Activated B cell treated with CpG ODN at 0.5 μM for 24 hours (primary cell): ENCODE measurements at regions of chr11 and their contacts with region 1.

Region 1: DNA sequence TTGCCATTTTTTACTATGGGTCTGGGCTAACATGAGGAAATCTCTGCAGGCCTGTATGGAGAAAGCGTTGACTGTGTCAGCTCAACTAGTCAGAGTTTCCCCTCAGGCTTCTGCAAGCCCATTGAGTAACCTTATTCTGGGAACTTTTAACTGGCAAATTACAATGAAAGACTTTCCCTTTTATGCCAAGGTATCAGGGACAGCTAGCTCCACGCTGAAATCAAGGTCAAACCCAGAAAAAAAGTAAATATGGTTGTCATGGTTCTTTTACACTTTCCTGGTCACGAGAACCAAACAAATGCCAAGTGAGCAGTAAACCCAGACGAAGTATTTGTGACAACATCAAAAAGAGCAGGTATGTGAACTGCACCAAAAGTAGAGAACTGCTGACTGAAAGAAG is 13.8 kb downstream of the OSBP start:
- DNase-seq: no peak
- ATAC-seq: no peak
- H3K4me3 Mint-ChIP-seq: no peak overlapping the region
- H3K27ac Mint-ChIP-seq: no peak overlapping the region
- H3K4me1 Mint-ChIP-seq: no peaks in the 10 kb centered on the region
- H3K27me3 Mint-ChIP-seq: no peaks in the 10 kb centered on the region
- CTCF ChIP-seq: no peak

Region 2: GRCh38 chr11:59523541-59523940 is 78.2 kb before region 1 on chr11:
- CTCF ChIA-PET with region 1: no interaction called
- POLR2A ChIA-PET with region 1: no interaction called
- intact Hi-C with region 1: no loop called
- DNase-seq: no peak
- ATAC-seq: no peak
- H3K4me3 Mint-ChIP-seq: no peak overlapping the region
- H3K27ac Mint-ChIP-seq: no peak overlapping the region
- H3K4me1 Mint-ChIP-seq: no peaks in the 10 kb centered on the region
- H3K27me3 Mint-ChIP-seq: peaks cover 7% of the 10 kb centered on the region
- CTCF ChIP-seq: no peak

Region 3: DNA sequence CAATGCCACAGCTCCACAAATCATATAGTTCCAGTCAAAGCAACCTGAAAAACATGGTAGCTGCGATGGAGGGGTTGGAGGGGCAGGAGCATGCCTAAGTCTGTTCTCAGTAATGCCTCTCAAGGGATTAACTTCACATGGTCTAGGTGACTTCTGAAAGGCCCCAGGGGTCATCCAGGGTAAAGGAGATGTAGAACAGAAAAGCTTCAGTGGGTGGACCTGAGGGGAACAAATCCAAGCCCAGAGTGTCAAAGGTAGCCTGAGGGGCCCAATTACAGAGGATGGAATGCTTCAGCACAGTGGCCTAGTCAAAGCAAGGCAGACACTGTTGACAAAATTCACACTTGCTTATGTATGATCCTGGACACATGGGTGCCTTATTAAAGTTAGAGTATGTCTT is 67.1 kb before region 1 on chr11:
- CTCF ChIA-PET with region 1: no interaction called
- POLR2A ChIA-PET with region 1: no interaction called
- intact Hi-C with region 1: no loop called
- DNase-seq: no peak
- ATAC-seq: no peak
- H3K4me3 Mint-ChIP-seq: no peak overlapping the region
- H3K27ac Mint-ChIP-seq: no peak overlapping the region
- H3K4me1 Mint-ChIP-seq: peaks cover 7% of the 10 kb centered on the region
- H3K27me3 Mint-ChIP-seq: peaks cover 4% of the 10 kb centered on the region
- CTCF ChIP-seq: no peak

Region 4: DNA sequence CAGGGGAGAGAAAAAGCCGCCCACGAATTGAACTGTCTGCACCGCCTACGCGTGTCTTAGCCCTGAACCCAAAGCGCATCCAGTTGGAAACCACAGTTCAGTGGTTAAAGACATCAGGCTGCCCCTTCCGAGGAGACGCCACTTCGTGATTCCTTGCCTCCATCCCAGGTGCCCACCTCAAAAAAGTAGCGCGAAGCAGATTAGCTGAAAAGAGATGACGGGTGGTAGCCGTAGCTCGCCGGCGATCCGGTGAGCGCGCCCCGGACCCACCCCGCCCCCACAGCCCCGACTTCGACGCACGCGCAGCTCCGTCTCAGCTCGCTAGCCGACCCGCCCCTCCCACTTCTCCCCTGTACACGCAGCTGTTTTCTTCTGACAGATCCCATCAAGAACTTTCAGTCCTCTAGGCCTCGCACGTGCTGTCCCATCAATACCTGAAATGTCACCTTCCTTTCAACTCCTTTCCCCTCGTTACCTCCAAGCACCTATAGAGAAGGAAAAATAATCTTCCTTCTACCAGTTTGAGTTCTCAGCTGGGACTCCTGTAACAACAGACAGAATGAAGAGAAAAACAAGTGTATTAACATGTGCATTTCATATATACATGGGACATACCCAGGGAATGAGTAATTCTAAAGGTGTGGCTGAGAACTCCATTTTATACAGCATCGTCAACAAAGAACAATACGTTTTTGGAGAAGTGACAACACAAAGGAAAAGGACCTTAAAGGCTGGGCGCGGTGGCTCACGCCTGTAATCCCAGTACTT is 40.9 kb before region 1 on chr11:
- CTCF ChIA-PET with region 1: no interaction called
- POLR2A ChIA-PET with region 1: no interaction called
- intact Hi-C with region 1: no loop called
- DNase-seq: peak; percentile 62
- ATAC-seq: peak; percentile 78
- H3K4me3 Mint-ChIP-seq: peak overlapping the region; percentile 92
- H3K27ac Mint-ChIP-seq: peak overlapping the region; percentile 91
- H3K4me1 Mint-ChIP-seq: peaks cover 43% of the 10 kb centered on the region
- H3K27me3 Mint-ChIP-seq: peaks cover 3% of the 10 kb centered on the region
- CTCF ChIP-seq: no peak

Region 5: GRCh38 chr11:59647245-59647980 is 45.6 kb after region 1 on chr11:
- CTCF ChIA-PET with region 1: no interaction called
- POLR2A ChIA-PET with region 1: interaction called, 10 read pairs
- intact Hi-C with region 1: no loop called
- DNase-seq: no peak
- ATAC-seq: no peak
- H3K4me3 Mint-ChIP-seq: no peak overlapping the region
- H3K27ac Mint-ChIP-seq: no peak overlapping the region
- H3K4me1 Mint-ChIP-seq: no peaks in the 10 kb centered on the region
- H3K27me3 Mint-ChIP-seq: no peaks in the 10 kb centered on the region
- CTCF ChIP-seq: no peak

Region 6: DNA sequence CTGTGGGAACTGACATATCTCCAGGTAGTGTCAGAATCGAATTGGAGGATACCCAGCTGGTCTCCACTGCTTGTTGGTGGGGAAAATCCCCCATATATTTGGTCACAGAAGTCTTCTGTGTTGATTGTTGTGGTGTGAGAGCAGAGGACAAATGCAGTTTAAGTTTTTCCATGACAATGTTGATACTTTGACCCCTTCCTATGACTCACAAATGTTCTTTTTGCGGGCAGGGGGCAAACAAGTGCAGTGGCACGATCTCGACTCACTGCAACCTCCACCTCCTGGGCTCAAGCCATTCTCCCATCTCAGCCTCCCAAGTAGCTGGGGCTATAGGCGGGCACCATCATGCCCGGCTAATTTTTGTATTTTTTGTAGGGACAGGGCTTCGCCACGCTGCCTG is 74.4 kb after region 1 on chr11:
- CTCF ChIA-PET with region 1: no interaction called
- POLR2A ChIA-PET with region 1: no interaction called
- intact Hi-C with region 1: no loop called
- DNase-seq: no peak
- ATAC-seq: no peak
- H3K4me3 Mint-ChIP-seq: no peak overlapping the region
- H3K27ac Mint-ChIP-seq: no peak overlapping the region
- H3K4me1 Mint-ChIP-seq: no peaks in the 10 kb centered on the region
- H3K27me3 Mint-ChIP-seq: peaks cover 2% of the 10 kb centered on the region
- CTCF ChIP-seq: no peak